Activated CD4-positive, alpha-beta memory T cell treated with anti-CD3 and anti-CD28 coated beads for 36 hours (primary cell): ENCODE measurements at regions of chr2 and their contacts with region 1.

Region 1: DNA sequence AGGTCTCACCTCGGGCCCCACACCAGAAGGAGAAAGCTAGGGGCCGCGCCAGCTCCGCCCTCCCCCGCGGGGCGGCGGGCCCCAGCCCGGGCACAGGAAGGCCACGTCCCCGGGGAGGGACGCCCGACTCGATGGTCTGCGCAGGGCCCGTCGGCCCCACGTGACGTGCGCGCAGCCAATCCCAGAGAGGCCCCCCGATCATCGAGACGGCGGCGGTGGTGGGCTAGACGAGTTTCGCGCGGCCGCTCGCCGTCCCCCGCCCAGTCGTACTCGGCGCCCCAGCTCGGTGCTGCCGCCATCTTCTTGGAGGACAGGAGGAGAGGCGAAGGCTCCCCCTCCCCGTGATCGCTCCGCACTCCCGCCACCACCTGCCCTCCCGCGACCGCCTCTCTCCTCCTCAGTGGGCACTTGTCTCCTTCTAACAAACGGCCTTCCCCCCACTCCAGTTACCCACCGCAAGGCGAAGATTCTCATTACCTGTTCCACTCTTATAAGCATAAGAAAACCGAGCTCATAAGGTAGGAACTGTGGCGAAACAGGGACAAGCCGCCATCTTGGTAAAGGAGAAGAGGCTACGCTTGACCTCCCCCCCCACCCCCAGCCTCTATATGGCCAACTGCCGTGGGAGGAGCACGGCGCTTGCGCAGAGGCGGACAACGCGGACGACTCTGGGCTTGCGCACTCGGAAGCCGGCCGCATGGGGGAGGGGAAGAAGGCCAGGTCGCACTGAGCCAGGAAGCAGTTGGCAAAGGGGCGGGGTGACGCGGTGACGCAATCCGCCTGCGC is at the start of gene HDLBP:
- DNase-seq: peak; percentile 100
- H3K4me3 Mint-ChIP-seq: peak within 1 kb of the TSS; percentile 98
- H3K27ac Mint-ChIP-seq: peak within 1 kb of the TSS; percentile 100
- H3K4me1 Mint-ChIP-seq: peaks cover 67% of the 10 kb centered on the region
- H3K27me3 Mint-ChIP-seq: no peaks in the 10 kb centered on the region
- total RNA-seq, gene HDLBP: 243 to 251 TPM

Region 2: GRCh38 chr2:240832205-240832727 is 483.0 kb before region 1 on chr2:
- CTCF ChIA-PET with region 1: no interaction called
- POLR2A ChIA-PET with region 1: no interaction called
- intact Hi-C with region 1: loop called (anchors 1 kb)
- DNase-seq: peak; percentile 97
- H3K4me3 Mint-ChIP-seq: peak overlapping the region; percentile 68
- H3K27ac Mint-ChIP-seq: no peak overlapping the region
- H3K4me1 Mint-ChIP-seq: no peaks in the 10 kb centered on the region
- H3K27me3 Mint-ChIP-seq: peaks cover 15% of the 10 kb centered on the region

Region 3: DNA sequence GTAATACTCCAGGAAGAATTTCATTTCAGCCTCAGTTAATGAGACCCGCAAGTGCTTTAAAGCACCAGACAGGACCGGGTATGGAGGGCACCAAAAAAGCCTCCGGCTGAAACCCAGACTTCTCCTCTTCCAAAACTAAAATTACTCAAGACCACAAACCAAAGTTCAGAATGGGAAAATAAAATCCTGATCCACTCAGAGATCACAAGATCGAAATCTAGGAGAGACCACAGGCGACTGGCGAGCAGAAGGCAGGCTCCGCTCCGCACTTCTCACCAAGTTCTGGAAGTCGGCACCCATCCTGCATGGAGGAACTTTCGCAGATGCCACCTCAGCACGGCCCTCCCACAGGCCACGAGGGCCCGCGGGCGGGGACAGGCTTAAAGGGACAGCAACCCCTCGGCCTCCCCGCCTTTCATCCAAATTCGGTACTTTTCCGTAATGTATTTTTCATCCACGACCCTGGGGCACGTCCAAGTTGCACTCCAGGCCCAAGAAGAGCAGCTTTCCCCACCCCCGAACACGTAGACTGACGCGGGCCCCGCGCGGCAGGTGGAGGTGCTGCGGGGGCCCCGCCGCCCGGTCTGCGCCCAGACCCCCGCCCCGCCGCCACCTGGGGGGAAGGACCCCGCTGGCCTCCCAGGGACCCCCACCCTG is 43.5 kb before region 1 on chr2:
- CTCF ChIA-PET with region 1: interaction called, 5 read pairs
- POLR2A ChIA-PET with region 1: no interaction called
- intact Hi-C with region 1: loop called (anchors 2 kb)
- DNase-seq: peak; percentile 70
- H3K4me3 Mint-ChIP-seq: peak overlapping the region; percentile 84
- H3K27ac Mint-ChIP-seq: peak overlapping the region; percentile 76
- H3K4me1 Mint-ChIP-seq: peaks cover 47% of the 10 kb centered on the region
- H3K27me3 Mint-ChIP-seq: no peaks in the 10 kb centered on the region

Region 4: GRCh38 chr2:241454837-241455485 is 139.7 kb after region 1 on chr2:
- CTCF ChIA-PET with region 1: no interaction called
- POLR2A ChIA-PET with region 1: no interaction called
- intact Hi-C with region 1: no loop called
- DNase-seq: no peak
- H3K4me3 Mint-ChIP-seq: no peak overlapping the region
- H3K27ac Mint-ChIP-seq: no peak overlapping the region
- H3K4me1 Mint-ChIP-seq: no peaks in the 10 kb centered on the region
- H3K27me3 Mint-ChIP-seq: peaks cover 8% of the 10 kb centered on the region

Region 5: DNA sequence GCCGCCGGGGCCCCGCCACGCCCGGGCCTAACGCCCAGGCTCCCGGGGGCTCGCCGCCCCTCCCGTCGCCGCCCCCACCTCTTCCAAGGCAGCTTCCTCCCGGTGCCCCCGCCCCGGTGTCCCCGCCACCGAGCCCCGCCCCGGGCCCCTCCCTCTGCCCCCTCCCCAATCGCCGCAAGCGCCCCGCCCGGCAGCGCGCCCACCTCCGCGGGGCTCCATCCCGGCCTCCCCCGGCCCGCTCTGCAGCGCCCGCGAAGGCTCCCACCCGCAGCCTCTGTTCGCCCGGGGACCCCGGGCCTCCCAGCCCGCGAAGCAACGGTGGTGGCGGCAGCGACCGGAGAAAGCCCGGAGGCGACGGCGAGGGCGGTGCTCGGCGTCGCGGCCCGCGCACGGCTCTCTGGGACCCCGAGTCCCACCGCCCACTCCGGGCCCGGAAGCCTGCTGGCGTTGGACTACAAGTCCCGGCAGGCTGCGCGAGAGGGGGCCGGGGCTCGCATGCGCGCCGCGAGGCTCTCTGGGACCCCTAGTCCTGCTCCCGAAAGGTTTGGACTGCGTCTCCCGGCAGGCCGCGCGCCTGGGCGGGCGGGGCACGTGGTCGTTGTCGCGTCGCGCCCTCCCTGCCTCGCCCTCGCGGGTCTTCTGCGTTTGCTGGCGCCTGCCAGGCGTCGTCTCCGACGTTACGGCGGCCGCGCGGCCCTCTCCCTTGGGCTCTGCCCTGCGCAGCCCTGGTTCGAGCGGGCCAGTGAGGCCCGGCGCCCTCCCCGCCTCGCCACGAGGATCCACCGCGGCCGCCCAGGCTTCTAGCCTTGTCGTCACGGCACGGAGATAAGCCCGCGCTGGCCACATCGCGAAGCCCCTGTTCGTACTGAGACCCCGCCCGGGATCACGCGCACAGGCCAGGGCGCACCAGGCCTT is 193.2 kb after region 1 on chr2 and contains the start of gene STK25:
- CTCF ChIA-PET with region 1: no interaction called
- POLR2A ChIA-PET with region 1: no interaction called
- intact Hi-C with region 1: loop called (anchors 1 kb)
- DNase-seq: peak; percentile 98
- H3K4me3 Mint-ChIP-seq: peak within 1 kb of the TSS; percentile 79
- H3K27ac Mint-ChIP-seq: peak within 1 kb of the TSS; percentile 56
- H3K4me1 Mint-ChIP-seq: peaks cover 19% of the 10 kb centered on the region
- H3K27me3 Mint-ChIP-seq: no peaks in the 10 kb centered on the region
- total RNA-seq, gene STK25: 97.9 to 99.1 TPM

Region 6: GRCh38 chr2:241686649-241687425 is 371.6 kb after region 1 on chr2 and contains the start of gene DTYMK:
- CTCF ChIA-PET with region 1: no interaction called
- POLR2A ChIA-PET with region 1: interaction called, 3 read pairs
- intact Hi-C with region 1: loop called (anchors 5 kb)
- DNase-seq: peak; percentile 97
- H3K4me3 Mint-ChIP-seq: peak within 1 kb of the TSS; percentile 98
- H3K27ac Mint-ChIP-seq: peak within 1 kb of the TSS; percentile 93
- H3K4me1 Mint-ChIP-seq: peaks cover 27% of the 10 kb centered on the region
- H3K27me3 Mint-ChIP-seq: no peaks in the 10 kb centered on the region
- total RNA-seq, gene DTYMK: 85.9 to 88.7 TPM